ENCODE measurements at regions of chr1 and their contacts with region 1.

Region 1: GRCh38 chr1:65148548-65149350 is 746 bp downstream of the AK4 start:
- DNase-seq: peak; percentile 85
- H3K4me3 ChIP-seq: peak overlapping the region; percentile 56 to 91 (median 66)
- H3K27ac ChIP-seq: peak overlapping the region; percentile 80 to 94 (median 91)
- H3K4me1 ChIP-seq: peaks cover 0 to 34% (median 20%) of the 10 kb centered on the region in 4 donors
- H3K27me3 ChIP-seq: no peaks in the 10 kb centered on the region
- CTCF ChIP-seq: no peak
- EP300 ChIP-seq: no peak
- POLR2A ChIP-seq: no peak

Region 2: GRCh38 chr1:64966158-64966971 is 182.4 kb before region 1 on chr1 and contains the start of gene JAK1:
- intact Hi-C with region 1: loop called (anchors 5 kb)
- DNase-seq: peak; percentile 94
- H3K4me3 ChIP-seq: peak within 1 kb of the TSS; percentile 51 to 97 (median 82)
- H3K27ac ChIP-seq: peak within 1 kb of the TSS; percentile 89 to 100 (median 94)
- H3K4me1 ChIP-seq: peaks cover 0 to 34% (median 24%) of the 10 kb centered on the region in 4 donors
- H3K27me3 ChIP-seq: no peaks in the 10 kb centered on the region
- CTCF ChIP-seq: no peak
- EP300 ChIP-seq: no peak
- POLR2A ChIP-seq: no peak
- total RNA-seq, gene JAK1: 99.6 to 143 (median 119) TPM

Region 3: DNA sequence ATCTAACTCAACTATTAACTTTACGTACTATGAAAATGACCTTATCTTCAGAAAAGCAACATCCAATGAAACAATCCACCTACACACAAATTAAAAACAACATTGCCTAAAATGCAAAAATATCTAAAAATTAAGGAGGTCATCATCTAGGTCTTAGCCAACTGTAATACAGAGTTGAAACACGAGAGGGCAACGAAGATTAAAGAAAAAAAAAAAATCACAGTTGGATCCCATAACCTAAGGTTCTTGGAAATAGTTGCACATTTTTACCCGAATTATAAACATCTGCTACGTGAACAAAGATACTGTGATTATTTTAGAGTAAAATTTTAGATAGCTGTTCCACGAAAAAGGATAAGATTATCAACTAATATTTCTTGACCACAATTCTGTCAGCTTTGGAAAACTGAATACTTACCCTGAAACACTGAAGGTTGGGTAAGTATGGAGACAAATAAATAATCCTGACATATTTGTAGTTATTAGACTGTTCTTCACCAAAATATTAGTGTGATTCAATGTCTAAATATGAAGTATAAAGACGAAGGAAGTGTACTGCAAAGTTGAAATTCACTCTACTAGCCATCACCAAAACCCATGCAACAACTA is 88.7 kb before region 1 on chr1:
- intact Hi-C with region 1: no loop called
- DNase-seq: no peak
- H3K4me3 ChIP-seq: no peak overlapping the region
- H3K27ac ChIP-seq: peak overlapping the region in 3 of 4 donors; percentile 7 to 18 (median 13)
- H3K4me1 ChIP-seq: peaks cover 0 to 93% (median 67%) of the 10 kb centered on the region in 4 donors
- H3K27me3 ChIP-seq: no peaks in the 10 kb centered on the region
- CTCF ChIP-seq: peak; percentile 24 to 68 (median 66)
- EP300 ChIP-seq: no peak
- POLR2A ChIP-seq: no peak

Region 4: GRCh38 chr1:65213271-65214023 is 64.7 kb after region 1 on chr1:
- intact Hi-C with region 1: loop called (anchors 5 kb)
- DNase-seq: no peak
- H3K4me3 ChIP-seq: no peak overlapping the region
- H3K27ac ChIP-seq: no peak overlapping the region
- H3K4me1 ChIP-seq: peaks cover 0 to 12% (median 6%) of the 10 kb centered on the region in 4 donors
- H3K27me3 ChIP-seq: no peaks in the 10 kb centered on the region
- CTCF ChIP-seq: no peak
- EP300 ChIP-seq: no peak
- POLR2A ChIP-seq: no peak

Region 5: GRCh38 chr1:65254319-65255034 is 105.7 kb after region 1 on chr1:
- intact Hi-C with region 1: loop called (anchors 10 kb)
- DNase-seq: peak; percentile 83
- H3K4me3 ChIP-seq: peak overlapping the region; percentile 53 to 84 (median 66)
- H3K27ac ChIP-seq: peak overlapping the region in 3 of 4 donors; percentile 58 to 72 (median 63)
- H3K4me1 ChIP-seq: peaks cover 0 to 18% (median 16%) of the 10 kb centered on the region in 4 donors
- H3K27me3 ChIP-seq: no peaks in the 10 kb centered on the region
- CTCF ChIP-seq: no peak
- EP300 ChIP-seq: no peak
- POLR2A ChIP-seq: no peak

Region 6: GRCh38 chr1:65419681-65420589 is 271.2 kb after region 1 on chr1:
- intact Hi-C with region 1: loop called (anchors 5 kb)
- DNase-seq: peak; percentile 99
- H3K4me3 ChIP-seq: peak overlapping the region; percentile 88 to 95 (median 92)
- H3K27ac ChIP-seq: peak overlapping the region; percentile 96 to 99 (median 98)
- H3K4me1 ChIP-seq: peaks cover 0 to 34% (median 27%) of the 10 kb centered on the region in 4 donors
- H3K27me3 ChIP-seq: no peaks in the 10 kb centered on the region
- CTCF ChIP-seq: no peak
- EP300 ChIP-seq: no peak
- POLR2A ChIP-seq: no peak